ENCODE measurements at regions of chr2 and their contacts with region 1.

Region 1: GRCh38 chr2:109128048-109128465 is 948 bp upstream of the SH3RF3 start:
- DNase-seq: peak; percentile 84 to 85
- ATAC-seq: peak; percentile 83 to 91 (median 88)
- H3K4me3 ChIP-seq: peak overlapping the region; percentile 50 to 80 (median 70)
- H3K27ac ChIP-seq: peak overlapping the region; percentile 41 to 91 (median 78)
- H3K4me1 ChIP-seq: peaks cover 0 to 50% (median 21%) of the 10 kb centered on the region in 9 donors
- H3K27me3 ChIP-seq: peaks cover 0 to 48% (median 0%) of the 10 kb centered on the region in 7 donors
- CTCF ChIP-seq: peak; percentile 78 to 99 (median 95)

Region 2: DNA sequence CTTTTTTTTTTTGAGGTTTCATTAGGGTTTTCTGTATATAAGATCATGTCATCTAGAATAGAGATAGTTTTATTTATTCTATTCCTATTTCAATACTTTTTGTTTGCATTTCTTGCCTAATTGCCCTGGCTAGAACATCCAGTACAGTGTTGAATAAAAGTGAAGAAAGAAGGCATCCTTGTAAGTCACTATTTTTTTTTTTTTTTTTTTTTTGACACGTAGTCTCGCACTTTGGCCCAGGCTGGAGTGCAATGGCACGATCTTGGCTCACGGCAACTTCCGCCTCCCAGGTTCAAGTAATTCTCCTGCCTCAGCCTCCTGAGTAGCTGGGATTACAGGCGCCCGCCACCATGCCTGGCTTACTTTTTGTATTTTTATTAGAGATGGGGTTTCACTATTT is 436.6 kb before region 1 on chr2:
- intact Hi-C with region 1: no loop called
- DNase-seq: no peak
- ATAC-seq: no peak
- H3K4me3 ChIP-seq: no peak overlapping the region
- H3K27ac ChIP-seq: no peak overlapping the region
- H3K4me1 ChIP-seq: peaks cover 0 to 3% (median 0%) of the 10 kb centered on the region in 9 donors
- H3K27me3 ChIP-seq: no peaks in the 10 kb centered on the region
- CTCF ChIP-seq: no peak

Region 3: DNA sequence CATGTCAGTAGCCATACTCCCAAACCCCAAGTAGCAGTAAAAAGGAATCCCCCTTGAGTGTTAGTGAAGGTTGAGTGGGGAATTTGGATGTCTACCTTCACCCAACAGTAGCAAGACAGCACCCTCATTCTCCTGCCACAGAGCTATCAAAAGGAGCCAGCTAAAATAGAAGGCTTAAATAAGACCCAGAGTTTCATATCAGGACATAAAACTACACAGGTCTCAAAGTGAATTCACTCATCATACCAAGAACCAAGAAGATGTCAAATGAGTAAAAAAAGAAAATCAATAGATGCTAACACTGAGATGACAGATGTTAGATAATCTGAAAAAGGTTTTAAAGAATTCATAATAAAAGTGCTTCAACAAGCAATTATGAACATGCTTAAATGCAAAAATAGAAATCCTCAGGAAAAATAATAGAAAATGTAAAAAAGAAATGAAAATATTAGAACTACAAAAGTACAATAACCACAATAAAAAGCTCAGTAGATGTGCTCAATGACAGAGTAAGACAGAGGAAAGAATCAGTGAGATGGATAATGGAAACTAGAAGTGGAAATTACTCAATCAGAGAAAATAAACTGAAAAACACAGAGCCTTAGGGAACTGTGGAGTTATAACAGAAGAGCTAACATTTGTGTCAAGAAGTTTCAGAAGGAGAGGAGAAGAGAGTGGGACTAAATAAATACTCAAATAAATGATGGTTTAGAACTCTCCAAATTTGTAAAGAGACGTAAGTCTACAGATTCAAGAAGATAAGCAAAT is 229.6 kb before region 1 on chr2:
- intact Hi-C with region 1: no loop called
- DNase-seq: no peak
- ATAC-seq: no peak
- H3K4me3 ChIP-seq: no peak overlapping the region
- H3K27ac ChIP-seq: no peak overlapping the region
- H3K4me1 ChIP-seq: no peaks in the 10 kb centered on the region
- H3K27me3 ChIP-seq: peaks cover 0 to 9% (median 0%) of the 10 kb centered on the region in 7 donors
- CTCF ChIP-seq: no peak

Region 4: GRCh38 chr2:109173311-109174171 is 45.5 kb after region 1 on chr2:
- intact Hi-C with region 1: loop called in 2 of 10 experiments (anchors 5 kb)
- DNase-seq: peak; percentile 70 to 72
- ATAC-seq: peak; percentile 60 to 91 (median 84)
- H3K4me3 ChIP-seq: no peak overlapping the region
- H3K27ac ChIP-seq: peak overlapping the region; percentile 71 to 87 (median 80)
- H3K4me1 ChIP-seq: peaks cover 12 to 70% (median 53%) of the 10 kb centered on the region in 9 donors
- H3K27me3 ChIP-seq: no peaks in the 10 kb centered on the region
- CTCF ChIP-seq: no peak

Region 5: GRCh38 chr2:109195193-109196045 is 67.4 kb after region 1 on chr2:
- intact Hi-C with region 1: loop called in 5 of 10 experiments (anchors 2 to 10 kb)
- DNase-seq: peak; percentile 54 to 58
- ATAC-seq: peak; percentile 59 to 89 (median 80)
- H3K4me3 ChIP-seq: peak overlapping the region in 1 of 10 donors; percentile 4
- H3K27ac ChIP-seq: peak overlapping the region; percentile 30 to 81 (median 68)
- H3K4me1 ChIP-seq: peaks cover 19 to 63% (median 30%) of the 10 kb centered on the region in 9 donors
- H3K27me3 ChIP-seq: no peaks in the 10 kb centered on the region
- CTCF ChIP-seq: no peak

Region 6: GRCh38 chr2:109213646-109214417 is 85.8 kb after region 1 on chr2:
- intact Hi-C with region 1: loop called in 2 of 10 experiments (anchors 10 kb)
- DNase-seq: no peak
- ATAC-seq: peak in 7 of 8 donors; percentile 25 to 74 (median 39)
- H3K4me3 ChIP-seq: peak overlapping the region in 1 of 10 donors; percentile 4
- H3K27ac ChIP-seq: peak overlapping the region in 1 of 10 donors; percentile 54
- H3K4me1 ChIP-seq: peaks cover 7 to 78% (median 53%) of the 10 kb centered on the region in 9 donors
- H3K27me3 ChIP-seq: peaks cover 0 to 19% (median 0%) of the 10 kb centered on the region in 7 donors
- CTCF ChIP-seq: no peak

Region 7: DNA sequence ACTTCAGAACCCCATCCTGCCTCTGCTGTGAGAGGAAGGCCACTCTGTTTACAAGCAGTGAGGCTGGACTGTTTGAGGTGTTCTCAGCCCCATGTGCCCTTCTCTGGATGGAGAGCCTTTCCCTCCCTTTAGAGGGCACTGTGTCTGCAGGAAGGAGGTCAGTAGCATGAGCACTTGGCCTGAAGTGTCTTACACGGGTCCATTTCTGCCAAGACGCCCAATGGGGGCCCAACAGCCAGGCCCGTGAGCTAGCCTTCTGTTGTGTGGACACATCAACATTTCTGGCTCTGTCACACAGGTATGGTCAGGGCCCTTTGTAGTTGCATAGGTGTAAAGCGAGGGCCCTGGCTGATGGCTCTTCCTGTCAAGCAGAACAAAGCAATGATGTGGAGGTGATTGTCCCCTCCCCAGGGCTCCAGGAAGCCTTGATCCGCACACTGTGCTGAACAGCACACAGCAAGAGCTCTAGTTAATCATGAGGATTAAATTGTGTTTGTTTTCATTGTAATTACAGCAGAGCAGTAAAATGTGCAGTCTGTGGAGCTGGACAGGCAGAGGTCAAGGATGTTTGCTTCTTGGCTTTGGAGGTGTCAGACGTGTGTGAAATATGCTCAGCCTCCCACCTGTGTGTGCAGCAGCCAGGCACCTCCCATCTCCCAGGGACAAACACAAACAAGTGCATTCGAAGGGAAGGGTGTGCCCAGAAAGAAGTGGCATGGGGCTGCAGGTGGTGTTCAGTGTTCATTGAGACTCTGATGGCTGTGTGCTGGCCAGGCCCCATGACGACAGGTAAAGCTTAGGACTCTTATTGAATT is 133.0 kb after region 1 on chr2:
- intact Hi-C with region 1: loop called in 1 of 10 experiments (anchors 10 kb)
- DNase-seq: no peak
- ATAC-seq: peak in 1 of 8 donors; percentile 26
- H3K4me3 ChIP-seq: no peak overlapping the region
- H3K27ac ChIP-seq: no peak overlapping the region
- H3K4me1 ChIP-seq: peaks cover 13 to 72% (median 36%) of the 10 kb centered on the region in 9 donors
- H3K27me3 ChIP-seq: no peaks in the 10 kb centered on the region
- CTCF ChIP-seq: peak in 6 of 9 donors; percentile 9 to 45 (median 26)

Region 8: GRCh38 chr2:109331896-109332848 is 204.1 kb after region 1 on chr2:
- intact Hi-C with region 1: loop called in 1 of 10 experiments (anchors 5 kb)
- DNase-seq: peak; percentile 63 to 65
- ATAC-seq: peak; percentile 82 to 95 (median 92)
- H3K4me3 ChIP-seq: peak overlapping the region in 7 of 10 donors; percentile 8 to 40 (median 26)
- H3K27ac ChIP-seq: peak overlapping the region in 8 of 10 donors; percentile 20 to 77 (median 62)
- H3K4me1 ChIP-seq: peaks cover 6 to 59% (median 29%) of the 10 kb centered on the region in 9 donors
- H3K27me3 ChIP-seq: peaks cover 0 to 6% (median 0%) of the 10 kb centered on the region in 7 donors
- CTCF ChIP-seq: no peak

Region 9: GRCh38 chr2:109486711-109487535 is 358.9 kb after region 1 on chr2:
- intact Hi-C with region 1: loop called in 1 of 10 experiments (anchors 5 kb)
- DNase-seq: no peak
- ATAC-seq: no peak
- H3K4me3 ChIP-seq: no peak overlapping the region
- H3K27ac ChIP-seq: no peak overlapping the region
- H3K4me1 ChIP-seq: peaks cover 15 to 22% (median 20%) of the 10 kb centered on the region in 9 donors
- H3K27me3 ChIP-seq: no peaks in the 10 kb centered on the region
- CTCF ChIP-seq: no peak

Measured in heart right ventricle (tissue), 16 donors.